ENCODE measurements at regions of chr2 and their contacts with region 1.

Region 1: GRCh38 chr2:224650815-224651439 is 65.2 kb downstream of the CCDC195 start:
- DNase-seq: no peak
- H3K4me3 ChIP-seq: no peak overlapping the region
- H3K27ac ChIP-seq: no peak overlapping the region
- H3K4me1 ChIP-seq: no peaks in the 10 kb centered on the region
- H3K27me3 ChIP-seq: no peaks in the 10 kb centered on the region
- CTCF ChIP-seq: peak; percentile 61 to 75 (median 70)
- POLR2A ChIP-seq: no peak

Region 2: DNA sequence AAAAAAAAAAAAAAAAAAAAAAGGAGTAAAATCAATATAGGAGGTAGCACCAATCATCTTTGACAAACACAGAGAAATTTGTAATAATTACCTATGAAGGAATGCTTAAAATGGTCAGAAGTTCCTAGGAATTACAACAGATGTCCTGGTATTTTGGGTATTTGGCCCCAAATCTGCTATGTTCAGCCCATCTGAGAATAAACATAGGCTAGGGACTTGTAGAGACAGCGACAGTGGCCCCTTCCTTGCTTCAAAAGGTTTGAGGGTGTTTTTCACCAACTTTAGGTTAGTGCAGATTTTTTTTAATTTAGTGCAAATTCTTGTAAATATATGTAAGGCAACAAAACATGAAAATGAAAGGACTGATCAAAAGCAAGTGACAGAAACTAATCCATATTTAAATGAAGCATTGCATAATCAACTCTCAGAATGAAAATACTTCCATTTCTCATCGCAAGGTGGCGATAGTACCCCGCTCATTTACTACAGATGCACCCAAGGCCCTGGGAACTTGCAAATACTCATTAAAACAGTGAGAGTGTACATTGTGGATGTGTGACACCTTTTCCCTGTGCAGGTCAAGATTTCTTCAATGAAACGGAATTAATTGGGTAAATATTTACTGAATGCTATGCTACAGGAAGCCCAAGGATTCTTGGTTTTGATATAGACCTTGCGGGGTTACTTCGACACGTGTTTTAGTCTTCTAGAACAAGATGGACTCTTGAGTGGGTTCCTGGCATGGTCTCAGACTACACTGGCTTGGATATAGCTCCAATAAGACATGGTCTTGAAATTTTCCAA is 293.6 kb before region 1 on chr2:
- intact Hi-C with region 1: loop called (anchors 5 kb)
- DNase-seq: peak; percentile 71
- H3K4me3 ChIP-seq: no peak overlapping the region
- H3K27ac ChIP-seq: no peak overlapping the region
- H3K4me1 ChIP-seq: no peaks in the 10 kb centered on the region
- H3K27me3 ChIP-seq: no peaks in the 10 kb centered on the region
- CTCF ChIP-seq: peak; percentile 70 to 91 (median 71)
- POLR2A ChIP-seq: no peak

Region 3: DNA sequence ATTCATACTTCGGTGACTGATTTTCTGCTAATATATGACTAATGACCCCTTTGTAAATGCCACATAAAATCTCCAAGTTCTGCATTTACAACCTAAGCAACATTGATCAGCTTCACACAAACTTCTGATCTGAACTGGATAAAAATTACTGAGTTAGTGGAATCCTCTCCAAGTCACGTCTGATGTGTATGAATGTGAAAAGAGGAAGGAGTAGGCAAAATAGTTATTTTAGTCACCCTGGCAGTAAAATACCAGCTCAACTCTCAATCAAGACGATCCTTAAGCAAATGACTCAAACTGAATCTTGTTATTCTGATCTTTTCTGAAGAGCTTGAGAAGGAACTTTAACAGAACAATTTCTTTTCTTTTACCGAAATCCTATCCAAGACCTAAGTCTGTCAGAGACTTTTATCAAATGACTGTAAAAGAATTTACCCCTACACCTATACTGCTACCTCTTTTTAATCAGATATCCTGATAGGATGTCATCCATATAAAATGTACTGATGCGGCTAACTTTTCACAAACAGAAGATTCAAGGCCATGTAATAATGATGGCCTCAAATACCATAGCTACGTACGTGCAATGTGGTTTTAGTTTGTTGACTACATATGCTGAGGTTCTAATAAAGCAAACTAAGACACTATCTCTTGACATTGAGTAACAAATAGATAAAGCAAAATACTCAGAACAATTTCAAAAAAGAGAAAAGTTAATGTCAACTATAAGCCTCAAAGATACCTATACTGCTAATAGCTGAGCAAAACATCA is 89.5 kb before region 1 on chr2:
- intact Hi-C with region 1: no loop called
- DNase-seq: no peak
- H3K4me3 ChIP-seq: no peak overlapping the region
- H3K27ac ChIP-seq: no peak overlapping the region
- H3K4me1 ChIP-seq: peaks cover 5% of the 10 kb centered on the region
- H3K27me3 ChIP-seq: no peaks in the 10 kb centered on the region
- CTCF ChIP-seq: no peak
- POLR2A ChIP-seq: no peak